HEK293T (cell line): ENCODE measurements at regions of chr17 and their contacts with region 1.

Region 1: GRCh38 chr17:50865984-50866774 is at the start of gene TOB1:
- DNase-seq: peak; percentile 90

Region 2: GRCh38 chr17:50848039-50848438 is 18.1 kb before region 1 on chr17:
- CTCF ChIA-PET with region 1: interaction called, 32 read pairs
- POLR2A ChIA-PET with region 1: interaction called, 53 read pairs
- DNase-seq: no peak

Region 3: GRCh38 chr17:50883850-50884438 is 17.8 kb after region 1 on chr17:
- CTCF ChIA-PET with region 1: interaction called, 8 read pairs
- POLR2A ChIA-PET with region 1: interaction called, 26 read pairs
- DNase-seq: no peak

Region 4: DNA sequence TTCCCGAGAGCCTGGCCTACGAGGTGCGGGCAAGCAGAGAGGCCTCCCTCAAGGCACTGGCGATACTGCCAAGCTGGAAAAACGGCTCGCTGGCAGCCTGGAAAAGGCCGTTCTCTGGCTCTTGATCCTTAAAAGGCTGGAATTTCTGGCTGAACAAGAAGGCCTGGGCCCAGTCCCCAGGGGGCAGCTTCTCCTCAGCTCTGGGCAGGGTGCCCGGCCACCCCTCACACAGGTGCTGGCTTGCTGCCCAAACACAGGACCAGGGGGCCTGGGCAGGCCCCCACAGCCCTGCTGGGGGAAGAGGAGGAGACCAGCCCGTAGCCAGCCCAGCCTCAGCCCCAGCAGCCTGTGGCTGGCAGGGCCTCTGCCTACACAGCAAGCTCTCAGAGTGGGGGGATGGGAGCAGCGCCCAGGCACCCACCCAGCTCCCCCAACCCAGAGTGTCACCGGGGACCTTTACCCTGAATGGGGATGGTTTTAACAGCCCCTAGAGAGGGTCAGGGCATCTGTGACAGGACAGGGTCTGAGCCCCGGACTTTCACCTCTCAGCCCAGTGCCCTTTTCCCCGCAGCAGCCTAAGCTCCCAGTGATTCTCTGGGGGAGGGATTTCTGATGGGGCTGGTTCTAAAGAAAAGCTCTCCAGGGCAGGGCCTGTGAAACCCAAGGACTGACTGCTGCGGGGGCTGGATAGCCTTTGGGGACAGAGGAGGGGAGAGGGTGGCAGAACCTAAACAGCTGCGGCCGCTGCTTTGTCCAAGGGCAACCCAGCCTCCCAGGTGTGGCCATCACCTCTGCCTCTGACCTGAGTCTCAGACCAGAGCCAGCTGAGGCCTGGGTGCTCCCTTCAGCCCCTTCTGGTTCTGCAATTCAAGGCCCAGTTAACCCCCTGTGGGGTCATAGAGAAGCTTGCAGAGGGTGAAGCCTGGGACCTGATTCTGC is 38.6 kb after region 1 on chr17:
- CTCF ChIA-PET with region 1: no interaction called
- POLR2A ChIA-PET with region 1: interaction called, 60 read pairs
- DNase-seq: no peak

Region 5: GRCh38 chr17:50931144-50931908 is 65.1 kb after region 1 on chr17:
- CTCF ChIA-PET with region 1: interaction called, 8 read pairs
- POLR2A ChIA-PET with region 1: interaction called, 34 read pairs
- DNase-seq: peak; percentile 74

Region 6: GRCh38 chr17:50956750-50957523 is 90.8 kb after region 1 on chr17:
- CTCF ChIA-PET with region 1: interaction called, 23 read pairs
- POLR2A ChIA-PET with region 1: interaction called, 93 read pairs
- DNase-seq: peak; percentile 83

Region 7: GRCh38 chr17:50993544-50993943 is 127.4 kb after region 1 on chr17:
- CTCF ChIA-PET with region 1: no interaction called
- POLR2A ChIA-PET with region 1: no interaction called
- DNase-seq: no peak